Esophagus muscularis mucosa (tissue), 4 donors: ENCODE measurements at regions of chr1 and their contacts with region 1.

Region 1: DNA sequence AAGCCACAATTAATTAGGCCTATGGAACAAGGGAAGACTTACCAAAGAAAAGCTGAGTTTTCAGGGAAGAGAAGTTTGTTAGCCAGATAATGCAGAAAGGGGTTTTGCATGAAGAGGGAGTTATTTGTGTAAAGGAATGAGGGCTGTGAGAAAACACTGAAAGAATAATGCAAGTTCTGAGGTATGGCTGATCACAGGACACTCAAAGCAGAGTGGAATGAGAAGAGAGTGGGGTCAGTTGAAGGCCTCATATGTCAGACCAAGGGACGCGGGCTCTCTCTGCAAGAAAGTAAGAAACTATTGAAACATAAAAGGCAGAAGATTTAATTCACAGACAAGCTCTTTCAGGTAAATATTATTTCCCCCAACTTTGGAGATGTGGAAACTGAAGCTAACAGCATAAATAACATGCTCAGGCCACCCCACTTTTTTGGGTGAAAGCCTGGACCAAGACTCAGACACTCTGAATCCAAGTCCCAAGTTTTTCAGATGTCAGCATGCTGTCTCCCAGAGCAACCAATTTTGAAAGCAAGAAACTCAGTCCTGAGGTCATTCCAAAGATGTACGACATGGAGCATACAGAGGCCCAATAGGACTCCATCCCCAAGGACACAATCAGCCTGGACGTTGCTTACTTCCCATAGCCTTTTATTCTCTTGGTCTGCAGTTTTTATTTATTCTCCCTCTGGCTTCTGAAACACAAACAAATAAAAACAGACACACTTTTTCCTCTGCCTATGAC is 47.3 kb upstream of the FGGY start:
- DNase-seq: no peak
- H3K4me3 ChIP-seq: no peak overlapping the region
- H3K27ac ChIP-seq: peak overlapping the region in 2 of 4 donors; percentile 43 to 54
- H3K4me1 ChIP-seq: peaks cover 7 to 21% (median 18%) of the 10 kb centered on the region in 4 donors
- H3K27me3 ChIP-seq: no peaks in the 10 kb centered on the region
- CTCF ChIP-seq: no peak
- EP300 ChIP-seq: no peak
- POLR2A ChIP-seq: no peak

Region 2: GRCh38 chr1:59186656-59187055 is 62.9 kb before region 1 on chr1:
- intact Hi-C with region 1: loop called (anchors 10 kb)
- DNase-seq: peak; percentile 89
- H3K4me3 ChIP-seq: no peak overlapping the region
- H3K27ac ChIP-seq: no peak overlapping the region
- H3K4me1 ChIP-seq: peaks cover 0 to 2% (median 0%) of the 10 kb centered on the region in 4 donors
- H3K27me3 ChIP-seq: no peaks in the 10 kb centered on the region
- CTCF ChIP-seq: no peak
- EP300 ChIP-seq: no peak
- POLR2A ChIP-seq: no peak